CD4-positive, alpha-beta T cell (primary cell): ENCODE measurements at regions of chr12 and their contacts with region 1.

Region 1: DNA sequence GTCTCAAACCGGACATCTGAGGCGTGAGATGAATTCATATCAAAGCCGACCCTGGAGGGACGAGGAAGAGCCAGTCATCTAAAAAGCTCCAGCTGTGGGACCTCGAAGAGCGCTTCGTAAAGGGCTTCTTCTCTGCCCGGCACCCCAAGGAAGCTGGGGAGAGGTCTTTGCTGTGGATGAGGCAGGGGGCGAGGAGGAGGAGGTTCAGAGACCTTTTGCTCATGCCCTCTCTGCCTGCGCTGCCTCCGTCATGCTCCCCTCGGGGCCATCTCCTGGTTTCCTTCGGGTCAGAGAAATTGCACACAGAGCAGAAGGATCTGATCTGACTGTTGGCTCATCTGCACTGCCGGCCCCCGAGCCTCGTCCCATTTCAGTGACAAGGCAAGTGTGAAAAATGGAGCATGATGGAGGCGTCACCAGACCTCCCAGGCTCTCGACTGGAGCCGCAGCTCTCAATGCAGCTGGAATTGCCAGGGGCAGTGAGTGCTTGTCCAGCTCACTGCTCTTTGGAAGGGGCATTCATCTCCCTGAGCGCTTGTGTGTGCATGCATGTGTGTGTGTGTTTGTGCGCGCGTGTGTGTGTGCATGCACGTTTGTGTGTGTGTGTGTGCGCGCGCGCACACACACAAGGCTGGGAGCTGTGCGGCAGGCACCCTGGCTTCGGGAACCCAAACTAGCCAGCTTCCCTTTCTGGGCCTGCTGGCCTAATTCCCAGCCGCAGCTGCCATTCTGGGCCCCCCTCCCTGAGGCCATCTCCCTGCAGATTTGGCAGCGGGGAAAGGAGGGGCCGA is 9.2 kb downstream of the CABP1 start:
- DNase-seq: peak in 1 of 14 experiments; percentile 31
- ATAC-seq: no peak
- H3K4me3 ChIP-seq: no peak overlapping the region
- H3K4me3 Mint-ChIP-seq: no peak overlapping the region
- H3K27ac ChIP-seq: no peak overlapping the region
- H3K27ac Mint-ChIP-seq: no peak overlapping the region
- H3K4me1 ChIP-seq: peaks cover 14% of the 10 kb centered on the region
- H3K4me1 Mint-ChIP-seq: peaks cover 11% of the 10 kb centered on the region
- H3K27me3 ChIP-seq: peaks cover 24 to 58% of the 10 kb centered on the region in 2 experiments
- H3K27me3 Mint-ChIP-seq: peaks cover 76% of the 10 kb centered on the region
- CTCF ChIP-seq: peak; percentile 54

Region 2: DNA sequence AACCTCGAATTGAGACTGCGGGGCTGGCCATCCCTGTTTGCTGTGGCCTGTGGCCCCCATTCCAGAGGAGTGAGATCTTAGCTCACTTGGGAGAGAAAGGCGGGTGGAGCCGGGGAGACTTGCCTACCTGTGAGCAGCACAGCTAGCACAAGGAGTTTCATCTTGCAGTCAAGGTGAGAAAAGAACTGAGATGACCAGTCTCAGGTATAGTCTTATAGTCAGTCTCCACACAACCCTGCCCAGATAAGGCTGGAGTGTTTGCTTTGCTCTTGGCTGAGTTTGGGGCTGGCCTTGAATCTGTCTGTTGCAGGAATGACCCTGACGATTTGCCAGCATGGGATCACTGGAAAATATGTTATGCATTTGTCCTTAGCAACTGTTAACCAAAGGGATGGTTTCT is 322.0 kb before region 1 on chr12 and contains the start of gene PLA2G1B:
- CTCF ChIA-PET with region 1: interaction called, 3 read pairs
- POLR2A ChIA-PET with region 1: no interaction called
- intact Hi-C with region 1: loop called (anchors 2 to 10 kb)
- DNase-seq: no peak
- ATAC-seq: no peak
- H3K4me3 ChIP-seq: no peak within 1 kb of the TSS
- H3K4me3 Mint-ChIP-seq: peak within 1 kb of the TSS; percentile 7
- H3K27ac ChIP-seq: no peak within 1 kb of the TSS
- H3K27ac Mint-ChIP-seq: no peak within 1 kb of the TSS
- H3K4me1 ChIP-seq: peaks cover 12% of the 10 kb centered on the region
- H3K4me1 Mint-ChIP-seq: peaks cover 6% of the 10 kb centered on the region
- H3K27me3 ChIP-seq: peaks cover 4 to 5% of the 10 kb centered on the region in 2 experiments
- H3K27me3 Mint-ChIP-seq: peaks cover 4% of the 10 kb centered on the region
- CTCF ChIP-seq: no peak
- total RNA-seq, gene PLA2G1B: not detected

Region 3: DNA sequence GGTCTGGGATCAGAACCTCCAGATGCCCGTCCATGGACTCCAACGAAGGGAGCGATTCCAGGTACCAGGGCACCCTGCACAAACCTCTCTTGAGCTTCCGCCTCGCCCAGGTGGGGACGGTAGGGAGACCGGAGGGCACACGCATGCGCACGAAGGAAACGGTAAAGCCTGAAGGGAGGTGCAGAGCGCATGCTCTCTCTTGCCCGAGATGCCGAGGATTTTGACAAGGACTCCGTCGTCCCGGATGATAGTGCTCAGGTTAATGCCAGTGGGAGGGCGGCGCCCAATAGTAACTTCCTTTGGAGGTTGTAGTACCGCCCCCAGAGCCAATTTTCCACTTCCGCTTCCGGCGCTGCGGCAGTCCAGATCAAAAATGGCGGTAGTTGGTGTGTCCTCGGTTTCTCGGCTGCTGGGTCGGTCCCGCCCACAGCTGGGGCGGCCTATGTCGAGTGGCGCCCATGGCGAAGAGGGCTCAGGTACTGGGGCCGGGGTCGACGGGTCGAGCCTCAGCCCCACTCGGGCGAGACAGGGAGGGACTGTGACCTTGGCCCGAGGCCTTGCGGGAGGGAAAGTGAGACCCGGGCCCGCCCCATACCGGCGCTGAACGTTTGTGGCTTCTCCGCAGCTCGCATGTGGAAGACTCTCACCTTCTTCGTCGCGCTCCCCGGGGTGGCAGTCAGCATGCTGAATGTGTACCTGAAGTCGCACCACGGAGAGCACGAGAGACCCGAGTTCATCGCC is 211.7 kb before region 1 on chr12 and contains the start of gene COX6A1:
- CTCF ChIA-PET with region 1: interaction called, 4 read pairs
- POLR2A ChIA-PET with region 1: no interaction called
- intact Hi-C with region 1: loop called in 1 of 2 experiments (anchors 5 kb)
- DNase-seq: peak; percentile 91 to 100 (median 96)
- ATAC-seq: peak; percentile 94
- H3K4me3 ChIP-seq: peak within 1 kb of the TSS; percentile 88
- H3K4me3 Mint-ChIP-seq: peak within 1 kb of the TSS; percentile 97
- H3K27ac ChIP-seq: peak within 1 kb of the TSS; percentile 69 to 88
- H3K27ac Mint-ChIP-seq: peak within 1 kb of the TSS; percentile 94
- H3K4me1 ChIP-seq: peaks cover 26% of the 10 kb centered on the region
- H3K4me1 Mint-ChIP-seq: peaks cover 31% of the 10 kb centered on the region
- H3K27me3 ChIP-seq: no peaks in the 10 kb centered on the region
- H3K27me3 Mint-ChIP-seq: no peaks in the 10 kb centered on the region
- CTCF ChIP-seq: no peak
- total RNA-seq, gene COX6A1: 112 to 116 TPM

Region 4: GRCh38 chr12:120514002-120514401 is 135.6 kb before region 1 on chr12:
- CTCF ChIA-PET with region 1: no interaction called
- POLR2A ChIA-PET with region 1: no interaction called
- intact Hi-C with region 1: no loop called
- DNase-seq: no peak
- ATAC-seq: no peak
- H3K4me3 ChIP-seq: no peak overlapping the region
- H3K4me3 Mint-ChIP-seq: no peak overlapping the region
- H3K27ac ChIP-seq: no peak overlapping the region
- H3K27ac Mint-ChIP-seq: no peak overlapping the region
- H3K4me1 ChIP-seq: no peaks in the 10 kb centered on the region
- H3K4me1 Mint-ChIP-seq: no peaks in the 10 kb centered on the region
- H3K27me3 ChIP-seq: no peaks in the 10 kb centered on the region
- H3K27me3 Mint-ChIP-seq: no peaks in the 10 kb centered on the region
- CTCF ChIP-seq: no peak

Region 5: DNA sequence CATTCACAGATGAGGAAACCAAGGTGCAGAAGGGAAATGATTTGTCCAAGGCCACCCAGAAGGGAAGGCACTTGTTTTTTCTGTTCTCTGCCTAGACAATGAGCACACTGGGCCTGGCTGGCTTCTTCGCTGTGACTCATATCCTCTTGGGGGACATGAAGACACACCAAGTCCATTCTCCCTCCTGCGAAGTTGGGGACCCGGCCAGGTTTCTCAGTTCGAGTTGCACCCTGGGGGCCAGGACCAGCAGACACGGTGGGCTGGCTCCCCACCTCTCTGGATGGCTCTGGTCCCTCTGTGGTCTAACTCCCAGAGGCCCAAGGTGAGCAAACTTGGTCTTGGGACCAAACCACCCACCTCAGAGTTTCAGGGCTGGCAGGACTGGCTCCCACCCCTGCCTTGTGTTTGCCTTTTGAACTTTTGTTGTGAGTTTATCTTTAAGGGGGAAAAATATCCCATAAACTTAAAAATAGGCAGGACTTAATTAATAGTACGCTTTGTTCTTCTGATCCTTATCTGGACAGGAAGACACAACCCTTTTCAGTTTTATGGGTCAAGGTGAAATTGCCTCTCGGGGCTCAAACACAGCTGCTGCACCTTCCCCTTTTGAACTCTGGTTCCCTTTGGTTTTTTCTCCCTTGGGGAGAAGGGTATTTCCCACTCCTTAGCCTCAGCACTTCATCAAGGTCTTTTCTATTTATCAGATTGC is 28.3 kb after region 1 on chr12:
- CTCF ChIA-PET with region 1: interaction called, 10 read pairs
- POLR2A ChIA-PET with region 1: no interaction called
- intact Hi-C with region 1: loop called in 1 of 2 experiments (anchors 2 kb)
- DNase-seq: peak in 3 of 14 experiments; percentile 21 to 34 (median 24)
- ATAC-seq: no peak
- H3K4me3 ChIP-seq: no peak overlapping the region
- H3K4me3 Mint-ChIP-seq: no peak overlapping the region
- H3K27ac ChIP-seq: no peak overlapping the region
- H3K27ac Mint-ChIP-seq: no peak overlapping the region
- H3K4me1 ChIP-seq: peaks cover 12% of the 10 kb centered on the region
- H3K4me1 Mint-ChIP-seq: no peaks in the 10 kb centered on the region
- H3K27me3 ChIP-seq: no peaks in the 10 kb centered on the region
- H3K27me3 Mint-ChIP-seq: no peaks in the 10 kb centered on the region
- CTCF ChIP-seq: no peak

Region 6: GRCh38 chr12:120710031-120710804 is 60.6 kb after region 1 on chr12 and contains the start of gene UNC119B:
- CTCF ChIA-PET with region 1: interaction called, 14 read pairs
- POLR2A ChIA-PET with region 1: interaction called, 5 read pairs
- intact Hi-C with region 1: loop called (anchors 1 kb)
- DNase-seq: peak; percentile 57 to 87 (median 70)
- ATAC-seq: peak; percentile 86
- H3K4me3 ChIP-seq: peak within 1 kb of the TSS; percentile 83
- H3K4me3 Mint-ChIP-seq: peak within 1 kb of the TSS; percentile 96
- H3K27ac ChIP-seq: peak within 1 kb of the TSS; percentile 13 to 58
- H3K27ac Mint-ChIP-seq: peak within 1 kb of the TSS; percentile 86
- H3K4me1 ChIP-seq: peaks cover 30% of the 10 kb centered on the region
- H3K4me1 Mint-ChIP-seq: peaks cover 42% of the 10 kb centered on the region
- H3K27me3 ChIP-seq: no peaks in the 10 kb centered on the region
- H3K27me3 Mint-ChIP-seq: no peaks in the 10 kb centered on the region
- CTCF ChIP-seq: no peak
- total RNA-seq, gene UNC119B: 10.7 TPM

Region 7: DNA sequence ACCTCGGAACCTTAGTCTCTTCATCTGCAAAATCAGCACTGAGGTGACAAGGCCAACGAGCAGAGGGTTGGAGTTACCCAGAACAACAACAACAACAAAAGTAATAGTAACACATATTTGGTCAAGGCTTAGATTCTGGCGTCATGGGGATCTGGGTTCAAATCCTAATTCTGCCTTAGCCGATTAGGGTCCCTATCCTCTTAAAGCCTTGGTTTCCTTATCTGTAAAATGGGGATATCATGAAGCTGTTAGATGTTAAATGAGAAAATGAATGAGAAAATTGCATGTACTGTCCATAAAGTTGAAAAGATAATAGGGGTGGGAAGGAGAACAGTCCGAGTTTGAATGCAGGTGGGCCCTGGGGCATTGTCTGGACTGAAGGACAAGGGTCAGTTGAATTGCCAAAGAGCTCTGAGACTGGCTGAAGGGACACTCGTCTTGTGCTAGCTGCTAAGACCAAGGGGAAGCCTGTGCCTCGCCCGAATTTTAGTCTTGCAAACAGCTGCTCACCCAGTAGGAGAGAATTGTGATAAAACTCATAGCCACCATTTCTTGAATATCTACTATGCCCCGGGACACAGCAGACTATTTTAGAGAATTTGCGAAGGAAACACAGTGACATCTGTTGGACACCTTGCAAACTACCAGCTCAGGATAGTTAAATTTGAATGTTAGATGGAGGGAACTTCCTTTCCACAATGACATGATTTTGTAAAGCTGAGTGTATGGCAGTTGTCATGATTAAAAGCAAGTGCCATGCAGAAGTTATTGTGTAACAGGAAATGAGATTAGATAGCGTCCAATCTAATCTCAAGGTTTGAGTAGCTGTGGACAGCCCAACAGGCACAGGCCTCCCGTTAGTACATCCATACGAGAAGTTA is 321.9 kb after region 1 on chr12:
- CTCF ChIA-PET with region 1: interaction called, 9 read pairs
- POLR2A ChIA-PET with region 1: interaction called, 3 read pairs
- intact Hi-C with region 1: loop called (anchors 1 to 2 kb)
- DNase-seq: peak in 10 of 14 experiments; percentile 4 to 79 (median 22)
- ATAC-seq: peak; percentile 98
- H3K4me3 ChIP-seq: no peak overlapping the region
- H3K4me3 Mint-ChIP-seq: no peak overlapping the region
- H3K27ac ChIP-seq: no peak overlapping the region
- H3K27ac Mint-ChIP-seq: no peak overlapping the region
- H3K4me1 ChIP-seq: peaks cover 6% of the 10 kb centered on the region
- H3K4me1 Mint-ChIP-seq: no peaks in the 10 kb centered on the region
- H3K27me3 ChIP-seq: no peaks in the 10 kb centered on the region
- H3K27me3 Mint-ChIP-seq: no peaks in the 10 kb centered on the region
- CTCF ChIP-seq: peak; percentile 78